GM12878 (cell line): ENCODE measurements at regions of chr16 and their contacts with region 1.

Region 1: GRCh38 chr16:61770301-61770700 is 265.9 kb downstream of the CDH8 start:
- DNase-seq: no peak
- ATAC-seq: no peak
- H3K4me3 ChIP-seq: no peak overlapping the region
- H3K27ac ChIP-seq: no peak overlapping the region
- H3K4me1 ChIP-seq: no peaks in the 10 kb centered on the region
- H3K27me3 ChIP-seq: no peaks in the 10 kb centered on the region
- CTCF ChIP-seq: no peak
- EP300 ChIP-seq: no peak
- POLR2A ChIP-seq: no peak
- RAD21 ChIP-seq: no peak

Region 2: DNA sequence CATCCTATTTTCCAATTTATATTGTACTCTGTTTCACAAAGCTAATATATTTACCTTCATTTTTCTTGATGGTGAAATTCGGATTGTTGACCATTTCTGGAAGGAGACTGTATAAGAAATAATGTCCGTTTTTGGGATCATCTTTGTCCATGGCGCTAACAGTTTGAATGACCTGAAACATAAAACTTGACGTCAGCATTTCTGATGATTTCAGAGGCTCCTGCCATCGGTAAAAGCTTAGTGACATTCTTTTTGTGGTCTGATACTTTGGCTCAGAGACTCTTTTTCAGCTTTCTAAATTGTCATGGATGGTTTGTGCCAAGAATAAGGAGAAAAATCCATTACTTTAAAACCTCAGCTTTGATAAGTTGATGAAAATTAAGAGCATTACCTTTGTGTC is 56.5 kb before region 1 on chr16:
- CTCF ChIA-PET with region 1: no interaction called
- POLR2A ChIA-PET with region 1: no interaction called
- RAD21 ChIA-PET with region 1: no interaction called
- SMC1A ChIA-PET with region 1: no interaction called
- in situ Hi-C with region 1: loop called (anchors 10 kb)
- intact Hi-C with region 1: no loop called
- DNase-seq: no peak
- ATAC-seq: no peak
- H3K4me3 ChIP-seq: no peak overlapping the region
- H3K27ac ChIP-seq: no peak overlapping the region
- H3K4me1 ChIP-seq: no peaks in the 10 kb centered on the region
- H3K27me3 ChIP-seq: no peaks in the 10 kb centered on the region
- CTCF ChIP-seq: no peak
- EP300 ChIP-seq: no peak
- POLR2A ChIP-seq: no peak
- RAD21 ChIP-seq: no peak